Left ventricle myocardium superior (tissue), 1 donor: ENCODE measurements at regions of chr3 and their contacts with region 1.

Region 1: DNA sequence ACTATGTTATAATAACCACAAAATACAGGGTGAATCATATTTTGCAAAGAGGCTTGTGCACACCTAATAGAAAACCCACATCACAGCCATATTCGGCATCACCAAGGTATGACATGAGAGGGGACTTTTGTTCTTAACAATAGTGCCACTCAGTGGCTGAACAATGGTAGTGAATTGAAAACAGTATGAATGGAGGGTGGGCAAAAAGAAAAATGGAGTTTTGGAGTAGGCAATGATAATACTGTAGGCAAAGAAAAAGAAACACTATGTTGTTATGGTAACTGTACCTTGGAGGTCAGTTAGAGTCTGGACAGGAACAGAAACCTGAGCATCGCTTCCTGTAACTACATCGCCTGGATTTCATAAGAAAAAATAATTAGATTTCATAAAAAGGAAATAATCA is 348.6 kb downstream of the PLCL2 start:
- DNase-seq: no peak
- ATAC-seq: peak; percentile 77

Region 2: DNA sequence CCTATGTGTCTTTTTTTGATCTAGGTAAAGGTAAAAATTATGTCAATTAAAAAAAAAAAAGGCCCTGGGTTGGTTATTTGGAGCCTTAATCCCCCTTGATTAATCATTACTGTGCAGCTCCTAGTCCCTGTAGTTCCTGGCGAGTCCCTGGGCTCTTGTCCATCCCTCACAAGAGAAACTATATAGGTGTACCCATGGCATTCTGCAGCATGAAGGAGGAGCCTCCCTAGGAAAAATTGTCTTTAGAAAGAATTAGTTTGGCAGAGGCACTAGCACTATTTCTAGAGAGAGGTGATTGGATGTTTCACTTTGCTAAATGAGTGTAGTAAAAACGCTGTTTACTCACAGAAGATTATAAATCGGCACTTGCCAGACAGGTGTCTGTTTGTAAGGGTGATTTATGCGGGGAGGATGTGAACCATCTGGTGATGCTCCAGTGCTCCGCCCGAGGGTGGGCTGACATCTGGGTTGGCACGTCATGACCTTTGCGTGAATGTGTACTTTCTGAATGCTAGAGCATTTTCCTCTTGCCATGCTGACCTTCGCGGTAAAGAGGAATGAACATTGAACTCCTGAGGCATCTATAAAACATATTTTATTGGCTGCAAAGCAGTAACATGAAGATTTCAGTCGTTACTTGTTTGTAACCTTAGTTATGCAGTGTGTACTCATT is 336.0 kb before region 1 on chr3:
- intact Hi-C with region 1: loop called (anchors 10 kb)
- DNase-seq: no peak
- ATAC-seq: no peak